Dorsolateral prefrontal cortex (tissue), 120 donors: ENCODE measurements at regions of chr5 and their contacts with region 1.

Region 1: GRCh38 chr5:72185496-72186329 is 78.4 kb downstream of the MAP1B start:
- DNase-seq: no peak
- H3K4me3 ChIP-seq: peak overlapping the region in 2 of 59 donors; percentile 5 to 8
- H3K27ac ChIP-seq: peak overlapping the region in 38 of 59 donors; percentile 1 to 92 (median 46)
- H3K27me3 ChIP-seq: no peaks in the 10 kb centered on the region
- CTCF ChIP-seq: no peak

Region 2: GRCh38 chr5:72138943-72139521 is 46.7 kb before region 1 on chr5:
- intact Hi-C with region 1: loop called in 1 of 2 experiments (anchors 10 kb)
- DNase-seq: no peak
- H3K4me3 ChIP-seq: no peak overlapping the region
- H3K27ac ChIP-seq: peak overlapping the region in 15 of 59 donors; percentile 8 to 60 (median 18)
- H3K27me3 ChIP-seq: no peaks in the 10 kb centered on the region
- CTCF ChIP-seq: no peak